Activated naive CD8-positive, alpha-beta T cell treated with anti-CD3 and anti-CD28 coated beads, Interleukin-2, amount 10 ng/mL, durations not matched to agents 7 days and 5 days (primary cell): ENCODE measurements at regions of chr19 and their contacts with region 1.

Region 1: DNA sequence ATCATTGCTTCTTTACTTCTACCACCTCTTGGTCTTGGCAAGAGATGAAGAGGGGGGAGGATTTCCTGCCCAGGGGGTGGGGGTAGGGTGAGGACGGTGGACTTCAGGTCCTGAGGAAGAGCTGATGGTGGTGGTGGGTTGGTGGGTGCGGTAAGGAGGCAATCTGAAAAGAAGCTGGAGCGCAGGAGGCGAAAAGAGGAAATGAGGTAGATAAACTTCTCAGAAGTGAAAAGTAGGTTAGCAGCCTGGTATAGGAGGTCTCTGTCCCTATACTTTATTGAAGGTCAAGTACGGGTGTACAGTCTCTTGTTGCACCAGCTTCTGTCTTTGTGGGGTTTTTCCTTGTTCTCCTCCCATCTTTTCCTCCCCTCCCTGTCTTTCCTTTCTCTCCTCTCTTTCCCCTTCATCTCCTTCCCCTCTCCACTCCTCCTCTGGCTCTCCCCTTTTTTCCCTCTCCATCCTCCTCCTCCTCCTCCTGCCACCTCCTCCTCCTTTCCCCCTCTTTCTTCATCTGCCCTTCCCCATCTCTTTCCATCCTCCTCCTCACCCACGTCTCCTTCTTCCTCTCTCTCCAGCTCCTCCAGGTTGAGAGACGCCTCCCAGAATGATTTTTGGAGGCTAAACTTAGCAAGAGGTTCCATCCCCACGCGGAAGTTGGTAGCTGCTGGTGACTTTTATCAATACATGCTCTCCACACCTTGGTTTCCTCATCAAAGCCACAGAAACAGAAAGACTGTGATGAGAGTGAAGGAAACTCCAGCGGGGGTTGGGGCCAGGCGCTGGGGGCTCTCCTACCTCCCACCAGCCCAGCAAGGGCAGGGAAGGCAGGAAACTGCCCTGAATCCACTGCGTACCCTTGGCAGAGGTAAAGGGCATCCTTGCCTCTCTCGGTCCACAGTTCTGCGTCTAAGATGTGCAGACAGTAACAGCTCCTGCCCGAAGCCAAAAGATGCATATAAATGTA is 15.3 kb downstream of the TNFSF14 start:
- DNase-seq: peak; percentile 69
- ATAC-seq: peak; percentile 72
- H3K4me3 Mint-ChIP-seq: peak overlapping the region; percentile 88
- H3K27ac Mint-ChIP-seq: peak overlapping the region; percentile 94
- H3K4me1 Mint-ChIP-seq: peaks cover 54% of the 10 kb centered on the region
- H3K27me3 Mint-ChIP-seq: no peaks in the 10 kb centered on the region

Region 2: GRCh38 chr19:6639439-6639838 is 15.2 kb before region 1 on chr19:
- POLR2A ChIA-PET with region 1: interaction called, 46 read pairs
- DNase-seq: no peak
- ATAC-seq: peak; percentile 59
- H3K4me3 Mint-ChIP-seq: peak overlapping the region; percentile 43
- H3K27ac Mint-ChIP-seq: peak overlapping the region; percentile 90
- H3K4me1 Mint-ChIP-seq: peaks cover 40% of the 10 kb centered on the region
- H3K27me3 Mint-ChIP-seq: no peaks in the 10 kb centered on the region

Region 3: DNA sequence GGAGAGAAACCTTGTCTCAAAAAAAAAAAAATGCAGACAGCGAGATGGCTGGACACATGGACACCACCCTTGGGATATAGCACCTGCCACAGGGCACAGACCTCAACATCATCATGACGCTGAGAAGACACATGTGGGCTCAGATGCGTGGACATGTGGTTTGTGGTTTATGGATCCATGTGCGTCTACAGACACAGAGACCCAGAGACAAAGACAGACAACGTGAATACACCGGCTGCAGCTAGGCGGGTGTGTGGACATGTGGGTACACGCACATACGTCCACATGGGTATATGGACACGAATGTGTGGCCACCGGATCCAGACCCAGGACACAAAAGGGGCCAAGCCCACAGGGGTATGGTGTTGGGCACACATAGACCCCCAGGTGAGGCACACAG is 14.1 kb after region 1 on chr19:
- POLR2A ChIA-PET with region 1: interaction called, 43 read pairs
- DNase-seq: no peak
- ATAC-seq: no peak
- H3K4me3 Mint-ChIP-seq: peak overlapping the region; percentile 92
- H3K27ac Mint-ChIP-seq: peak overlapping the region; percentile 94
- H3K4me1 Mint-ChIP-seq: peaks cover 22% of the 10 kb centered on the region
- H3K27me3 Mint-ChIP-seq: no peaks in the 10 kb centered on the region

Region 4: DNA sequence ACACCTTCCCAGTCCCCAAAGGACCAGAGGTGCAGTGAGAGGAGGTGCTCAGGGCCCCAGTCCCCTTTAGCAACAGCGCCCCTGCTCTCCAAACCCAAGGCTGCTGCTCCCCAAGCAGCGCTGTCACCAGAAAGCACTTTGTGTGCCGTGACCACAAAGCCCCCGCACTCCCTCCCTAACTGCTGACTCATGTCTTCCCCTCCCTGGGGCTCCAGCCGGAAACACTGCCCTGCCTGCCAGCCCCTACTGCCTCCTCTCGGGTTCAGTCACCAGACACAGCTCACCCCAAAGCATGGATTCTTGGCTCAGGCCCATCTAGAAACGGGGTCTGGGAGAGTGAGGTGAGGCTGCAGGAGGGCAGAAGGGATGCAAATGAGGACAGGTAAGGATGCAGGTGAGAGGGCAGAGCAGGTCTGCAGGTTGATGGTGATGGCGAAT is 20.3 kb after region 1 on chr19:
- POLR2A ChIA-PET with region 1: interaction called, 43 read pairs
- DNase-seq: peak; percentile 83
- ATAC-seq: peak; percentile 68
- H3K4me3 Mint-ChIP-seq: peak overlapping the region; percentile 77
- H3K27ac Mint-ChIP-seq: peak overlapping the region; percentile 75
- H3K4me1 Mint-ChIP-seq: peaks cover 48% of the 10 kb centered on the region
- H3K27me3 Mint-ChIP-seq: peaks cover 4% of the 10 kb centered on the region

Region 5: GRCh38 chr19:6697291-6697690 is 42.7 kb after region 1 on chr19:
- POLR2A ChIA-PET with region 1: no interaction called
- DNase-seq: no peak
- ATAC-seq: peak; percentile 68
- H3K4me3 Mint-ChIP-seq: peak overlapping the region; percentile 32
- H3K27ac Mint-ChIP-seq: peak overlapping the region; percentile 56
- H3K4me1 Mint-ChIP-seq: peaks cover 10% of the 10 kb centered on the region
- H3K27me3 Mint-ChIP-seq: peaks cover 6% of the 10 kb centered on the region

Region 6: GRCh38 chr19:6710273-6711077 is 55.8 kb after region 1 on chr19:
- POLR2A ChIA-PET with region 1: no interaction called
- DNase-seq: no peak
- ATAC-seq: no peak
- H3K4me3 Mint-ChIP-seq: peak overlapping the region; percentile 53
- H3K27ac Mint-ChIP-seq: peak overlapping the region; percentile 80
- H3K4me1 Mint-ChIP-seq: peaks cover 11% of the 10 kb centered on the region
- H3K27me3 Mint-ChIP-seq: peaks cover 31% of the 10 kb centered on the region